ENCODE measurements at regions of chr3 and their contacts with region 1.

Region 1: DNA sequence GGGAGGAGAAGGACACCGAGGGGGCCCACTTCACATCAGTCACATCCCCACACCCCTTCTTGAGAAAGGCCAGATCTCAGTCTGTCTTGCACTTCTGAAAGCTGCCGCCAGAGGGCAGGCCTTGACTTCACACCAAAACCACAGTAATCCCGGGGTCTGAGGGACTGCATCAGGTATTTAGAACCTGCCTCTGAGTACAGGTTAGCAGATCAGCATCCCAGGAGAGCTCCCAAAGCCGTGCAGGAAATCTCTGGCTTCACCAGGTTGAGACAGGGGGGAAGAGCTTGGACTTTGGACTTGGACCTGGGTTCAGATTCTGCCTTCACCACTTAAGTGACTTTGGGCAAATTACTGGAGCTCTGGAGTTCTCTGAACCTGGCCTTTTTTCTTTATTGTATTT is 50.3 kb downstream of the LHFPL4 start:
- DNase-seq: peak; percentile 80 to 83
- ATAC-seq: peak; percentile 31 to 64; a peak in 4 of 6 replicates
- H3K4me3 ChIP-seq: no peak overlapping the region
- H3K27ac ChIP-seq: no peak overlapping the region
- H3K4me1 ChIP-seq: peaks cover 8% of the 10 kb centered on the region; the same call in 1 of the 3 replicates
- CTCF ChIP-seq: peak; percentile 90
- EP300 ChIP-seq: no peak
- POLR2A ChIP-seq: no peak
- RAD21 ChIP-seq: peak; percentile 87 to 90

Region 2: DNA sequence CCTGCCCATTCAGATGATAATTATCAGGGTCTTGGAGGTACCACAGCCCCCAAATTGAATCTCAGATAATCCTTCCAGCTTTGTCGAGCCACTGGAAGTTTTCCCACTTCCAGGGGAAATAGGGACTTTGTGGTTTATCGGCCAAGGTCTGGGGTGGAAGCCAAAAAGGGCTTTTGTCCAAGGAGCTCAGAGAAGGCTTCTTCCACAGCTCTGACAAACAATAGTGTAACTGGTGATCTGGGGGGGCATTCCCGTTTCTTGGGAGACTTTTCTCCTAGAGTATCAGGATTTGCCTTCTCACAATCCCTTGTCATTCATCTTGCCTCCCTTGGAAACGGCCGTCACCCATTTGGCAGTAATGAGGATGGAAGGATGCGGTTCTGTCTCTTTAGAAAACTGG is 272.3 kb before region 1 on chr3:
- CTCF ChIA-PET with region 1: no interaction called
- POLR2A ChIA-PET with region 1: no interaction called
- DNase-seq: no peak
- ATAC-seq: no peak
- H3K4me3 ChIP-seq: no peak overlapping the region
- H3K27ac ChIP-seq: no peak overlapping the region
- H3K4me1 ChIP-seq: no peaks in the 10 kb centered on the region
- CTCF ChIP-seq: no peak
- EP300 ChIP-seq: no peak
- POLR2A ChIP-seq: no peak
- RAD21 ChIP-seq: no peak

Region 3: GRCh38 chr3:9316881-9317361 is 186.4 kb before region 1 on chr3:
- CTCF ChIA-PET with region 1: no interaction called
- POLR2A ChIA-PET with region 1: no interaction called
- DNase-seq: no peak
- ATAC-seq: no peak
- H3K4me3 ChIP-seq: no peak overlapping the region
- H3K27ac ChIP-seq: no peak overlapping the region
- H3K4me1 ChIP-seq: no peaks in the 10 kb centered on the region
- CTCF ChIP-seq: no peak
- EP300 ChIP-seq: no peak
- POLR2A ChIP-seq: no peak
- RAD21 ChIP-seq: no peak

Region 4: GRCh38 chr3:9439331-9439730 is 64.0 kb before region 1 on chr3:
- CTCF ChIA-PET with region 1: no interaction called
- POLR2A ChIA-PET with region 1: no interaction called
- DNase-seq: no peak
- ATAC-seq: no peak
- H3K4me3 ChIP-seq: no peak overlapping the region
- H3K27ac ChIP-seq: no peak overlapping the region
- H3K4me1 ChIP-seq: peaks cover 10% of the 10 kb centered on the region; the same call in 1 of the 3 replicates
- CTCF ChIP-seq: no peak
- EP300 ChIP-seq: no peak
- POLR2A ChIP-seq: no peak
- RAD21 ChIP-seq: no peak

Region 5: GRCh38 chr3:9491506-9491905 is 11.8 kb before region 1 on chr3:
- CTCF ChIA-PET with region 1: interaction called, 26 read pairs
- POLR2A ChIA-PET with region 1: no interaction called
- DNase-seq: no peak
- ATAC-seq: no peak
- H3K4me3 ChIP-seq: no peak overlapping the region
- H3K27ac ChIP-seq: no peak overlapping the region
- H3K4me1 ChIP-seq: no peaks in the 10 kb centered on the region
- CTCF ChIP-seq: no peak
- EP300 ChIP-seq: no peak
- POLR2A ChIP-seq: no peak
- RAD21 ChIP-seq: no peak

Region 6: DNA sequence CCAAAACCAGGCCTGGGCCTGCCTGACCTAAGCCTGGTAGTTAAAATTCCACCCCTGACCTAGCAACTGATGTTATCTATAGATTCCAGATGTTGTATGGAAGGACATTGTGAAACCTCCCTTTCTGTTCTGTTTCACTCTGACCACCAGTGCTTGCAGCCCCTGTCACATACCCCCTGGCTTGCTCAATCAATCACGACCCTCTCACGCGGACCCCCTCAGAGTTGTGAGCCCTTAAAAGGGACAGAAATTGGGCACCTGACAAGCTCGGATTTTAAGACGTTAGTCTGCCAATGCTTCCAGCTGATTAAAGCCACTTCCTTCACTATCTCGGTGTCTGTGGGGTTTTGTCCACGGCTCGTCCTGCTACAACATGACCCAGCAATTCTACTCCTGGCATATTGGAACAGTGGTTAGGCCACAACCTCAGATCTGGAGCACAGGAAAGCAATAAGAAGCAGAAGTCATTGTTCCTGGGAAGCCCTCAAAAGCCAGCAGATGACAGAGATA is 87.1 kb after region 1 on chr3:
- CTCF ChIA-PET with region 1: no interaction called
- POLR2A ChIA-PET with region 1: no interaction called
- DNase-seq: no peak
- ATAC-seq: no peak
- H3K4me3 ChIP-seq: no peak overlapping the region
- H3K27ac ChIP-seq: no peak overlapping the region
- H3K4me1 ChIP-seq: no peaks in the 10 kb centered on the region
- CTCF ChIP-seq: no peak
- EP300 ChIP-seq: no peak
- POLR2A ChIP-seq: no peak
- RAD21 ChIP-seq: no peak

Region 7: DNA sequence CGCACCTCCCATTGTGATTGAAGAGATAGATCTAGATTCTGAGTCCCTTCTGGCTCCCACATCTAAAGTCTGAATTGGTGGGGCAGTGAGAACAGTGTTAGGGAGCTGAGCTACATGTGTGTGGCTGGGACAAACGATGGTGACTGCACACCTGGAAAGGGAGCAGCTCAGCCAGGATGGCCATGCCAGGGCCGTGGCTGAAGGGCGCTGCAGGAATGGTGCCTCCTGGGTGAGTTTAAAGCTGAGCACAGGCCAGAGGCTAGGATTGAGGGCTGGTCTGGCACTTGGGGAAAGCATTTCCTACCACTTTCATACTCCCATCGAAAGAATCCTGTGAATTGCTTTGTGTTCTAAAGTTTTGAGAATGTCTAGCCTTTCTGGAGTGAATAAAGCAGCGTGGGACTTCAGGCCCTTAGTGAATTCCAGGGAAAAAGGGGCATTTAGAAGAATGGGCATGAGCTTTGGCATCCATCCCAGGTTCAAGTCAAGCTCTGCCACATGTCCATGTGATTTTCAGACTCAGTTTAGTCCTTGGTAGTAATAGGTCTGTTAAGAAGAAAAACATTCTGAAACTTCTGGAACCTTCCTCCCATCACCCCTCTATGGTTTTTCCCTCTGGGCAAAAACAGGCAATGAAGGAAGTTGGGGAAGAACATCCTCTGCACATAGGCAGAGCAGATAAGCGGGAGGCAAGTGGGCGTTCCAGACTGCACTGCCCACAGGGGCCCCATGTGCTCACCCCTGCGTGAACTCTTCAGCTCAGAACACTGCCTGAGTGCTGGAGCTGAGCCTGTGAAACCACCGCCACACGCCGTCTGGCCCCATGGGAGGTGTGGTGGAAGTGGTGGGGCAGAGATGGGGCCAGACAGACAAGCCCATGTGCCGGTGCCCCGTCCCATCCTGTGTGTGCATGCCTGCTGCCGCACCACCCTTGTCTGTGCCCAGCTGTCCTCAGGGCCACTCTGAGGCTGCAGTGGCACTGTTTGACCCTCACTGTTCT is 187.5 kb after region 1 on chr3:
- CTCF ChIA-PET with region 1: interaction called, 19 read pairs
- POLR2A ChIA-PET with region 1: no interaction called
- DNase-seq: no peak
- ATAC-seq: no peak
- H3K4me3 ChIP-seq: no peak overlapping the region
- H3K27ac ChIP-seq: no peak overlapping the region
- H3K4me1 ChIP-seq: no peaks in the 10 kb centered on the region
- CTCF ChIP-seq: no peak
- EP300 ChIP-seq: no peak
- POLR2A ChIP-seq: no peak
- RAD21 ChIP-seq: no peak

Region 8: GRCh38 chr3:9721015-9721699 is 217.9 kb after region 1 on chr3:
- CTCF ChIA-PET with region 1: interaction called, 52 read pairs
- POLR2A ChIA-PET with region 1: no interaction called
- DNase-seq: no peak
- ATAC-seq: peak; percentile 44 to 66; a peak in 4 of 6 replicates
- H3K4me3 ChIP-seq: no peak overlapping the region
- H3K27ac ChIP-seq: no peak overlapping the region
- H3K4me1 ChIP-seq: peaks cover 9% of the 10 kb centered on the region
- CTCF ChIP-seq: no peak
- EP300 ChIP-seq: no peak
- POLR2A ChIP-seq: no peak
- RAD21 ChIP-seq: no peak

Measured in A549 (cell line).